ENCODE measurements at regions of chrX and their contacts with region 1.

Region 1: GRCh38 chrX:15789979-15790768 is at the start of gene ZRSR2:
- DNase-seq: peak; percentile 92 to 95
- ATAC-seq: peak; percentile 96
- H3K4me3 ChIP-seq: peak within 1 kb of the TSS; percentile 62 to 70
- H3K27ac ChIP-seq: peak within 1 kb of the TSS in 1 of 2 donors; percentile 72
- H3K4me1 ChIP-seq: no peaks in the 10 kb centered on the region
- H3K27me3 ChIP-seq: no peaks in the 10 kb centered on the region
- total RNA-seq, gene ZRSR2: 13.4 to 18.9 TPM

Region 2: GRCh38 chrX:15686818-15687685 is 103.1 kb before region 1 on chrX:
- intact Hi-C with region 1: loop called in 1 of 2 experiments (anchors 5 kb)
- DNase-seq: no peak
- ATAC-seq: peak; percentile 89
- H3K4me3 ChIP-seq: no peak overlapping the region
- H3K27ac ChIP-seq: no peak overlapping the region
- H3K4me1 ChIP-seq: no peaks in the 10 kb centered on the region
- H3K27me3 ChIP-seq: no peaks in the 10 kb centered on the region

Region 3: DNA sequence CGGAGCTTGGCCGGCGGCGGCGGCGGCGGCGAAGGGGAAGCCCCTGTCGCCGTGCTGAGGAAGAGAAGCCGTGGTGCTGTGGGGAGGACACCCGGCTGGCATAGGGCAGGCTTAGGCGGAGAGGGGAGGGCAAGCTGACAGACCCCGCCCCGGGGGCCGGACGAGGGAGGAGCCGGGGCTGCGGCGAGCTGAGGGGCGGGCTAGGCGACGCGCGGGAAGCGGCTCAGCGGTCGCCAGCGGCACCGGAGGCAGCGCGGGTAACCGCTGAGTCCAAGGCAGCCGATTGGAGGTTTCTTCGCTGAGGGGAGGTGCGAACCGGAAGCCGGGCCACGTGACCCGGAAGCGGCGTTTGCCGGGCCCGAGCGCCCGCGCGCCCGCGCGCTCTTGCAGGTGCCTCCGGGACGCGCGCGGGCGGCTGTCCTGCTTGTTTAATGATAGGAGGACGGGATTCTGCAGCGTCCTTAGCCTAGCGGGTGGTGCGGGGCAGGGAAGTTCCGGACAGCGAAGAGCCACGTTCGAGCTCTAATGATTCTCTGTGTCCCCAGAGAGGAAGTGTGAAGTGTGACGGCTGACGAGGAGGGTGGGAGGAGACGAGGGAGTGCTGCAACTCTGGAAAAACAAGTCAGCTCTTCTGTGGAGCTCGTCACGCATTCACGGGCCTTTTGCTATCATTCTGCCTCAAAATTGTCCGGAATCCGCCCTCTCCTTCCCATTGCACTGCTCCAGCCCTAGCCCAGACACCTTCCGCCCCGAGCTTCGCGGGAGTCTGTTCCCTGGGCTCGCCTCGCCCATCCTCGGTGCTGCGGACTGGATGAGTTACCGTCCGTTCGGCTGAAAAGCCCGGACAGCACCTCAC is 64.8 kb after region 1 on chrX and contains the start of gene AP1S2:
- intact Hi-C with region 1: loop called in 1 of 2 experiments (anchors 5 kb)
- DNase-seq: peak; percentile 98
- ATAC-seq: peak; percentile 97
- H3K4me3 ChIP-seq: peak within 1 kb of the TSS; percentile 62 to 98
- H3K27ac ChIP-seq: peak within 1 kb of the TSS; percentile 7 to 96
- H3K4me1 ChIP-seq: no peaks in the 10 kb centered on the region
- H3K27me3 ChIP-seq: no peaks in the 10 kb centered on the region
- total RNA-seq, gene AP1S2: 49.1 to 55.9 TPM